Dorsolateral prefrontal cortex (tissue), 120 donors: ENCODE measurements at regions of chr9 and their contacts with region 1.

Region 1: GRCh38 chr9:78439190-78439865 is 142.4 kb downstream of the PSAT1 start:
- DNase-seq: peak; percentile 75 to 94 (median 87)
- H3K4me3 ChIP-seq: peak overlapping the region in 55 of 59 donors; percentile 5 to 66 (median 37)
- H3K27ac ChIP-seq: peak overlapping the region in 45 of 59 donors; percentile 5 to 87 (median 55)
- H3K27me3 ChIP-seq: no peaks in the 10 kb centered on the region
- CTCF ChIP-seq: peak; percentile 81 to 98 (median 93)

Region 2: GRCh38 chr9:78424299-78424698 is 15.0 kb before region 1 on chr9:
- intact Hi-C with region 1: no loop called
- DNase-seq: no peak
- H3K4me3 ChIP-seq: no peak overlapping the region
- H3K27ac ChIP-seq: no peak overlapping the region
- H3K27me3 ChIP-seq: no peaks in the 10 kb centered on the region
- CTCF ChIP-seq: no peak

Region 3: GRCh38 chr9:78453450-78453849 is 14.1 kb after region 1 on chr9:
- intact Hi-C with region 1: no loop called
- DNase-seq: no peak
- H3K4me3 ChIP-seq: no peak overlapping the region
- H3K27ac ChIP-seq: no peak overlapping the region
- H3K27me3 ChIP-seq: no peaks in the 10 kb centered on the region
- CTCF ChIP-seq: no peak

Region 4: GRCh38 chr9:78592811-78593210 is 153.5 kb after region 1 on chr9:
- intact Hi-C with region 1: loop called in 1 of 2 experiments (anchors 10 kb)
- DNase-seq: no peak
- H3K4me3 ChIP-seq: no peak overlapping the region
- H3K27ac ChIP-seq: no peak overlapping the region
- H3K27me3 ChIP-seq: no peaks in the 10 kb centered on the region
- CTCF ChIP-seq: no peak

Region 5: DNA sequence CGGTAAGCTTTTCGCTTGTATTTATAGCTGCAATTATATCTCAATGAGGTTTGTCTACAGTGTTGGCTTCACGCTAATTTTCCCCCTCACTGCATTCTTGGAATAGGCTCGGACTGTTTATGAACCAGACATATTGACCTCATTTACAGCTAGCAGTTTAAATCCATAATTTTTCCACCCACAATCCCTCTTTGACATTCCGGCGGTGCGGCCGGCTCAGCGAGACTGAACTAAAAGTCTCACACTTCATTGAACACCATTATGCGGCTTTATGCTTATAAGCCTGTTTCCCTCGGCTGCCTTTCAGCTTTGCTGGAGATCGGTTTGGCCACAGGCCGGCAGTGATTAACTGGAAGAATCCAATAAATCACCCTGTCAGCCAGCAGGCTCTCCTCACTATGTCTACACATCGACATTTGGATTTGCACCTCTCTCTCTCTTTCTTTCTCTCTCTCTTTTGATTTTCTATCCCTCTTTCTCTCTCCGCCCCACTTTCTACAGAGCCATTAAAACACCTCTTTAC is 817.4 kb after region 1 on chr9:
- intact Hi-C with region 1: loop called in 1 of 2 experiments (anchors 10 kb)
- DNase-seq: peak in 3 of 10 donors; percentile 31 to 43 (median 42)
- H3K4me3 ChIP-seq: peak overlapping the region in 58 of 59 donors; percentile 2 to 62 (median 42)
- H3K27ac ChIP-seq: peak overlapping the region in 13 of 59 donors; percentile 2 to 60 (median 26)
- H3K27me3 ChIP-seq: peaks cover 0 to 36% (median 3%) of the 10 kb centered on the region in 45 donors
- CTCF ChIP-seq: no peak